ENCODE measurements at regions of chr2 and their contacts with region 1.

Region 1: GRCh38 chr2:85813982-85814801 is 60.4 kb downstream of the ATOH8 start:
- DNase-seq: peak; percentile 85 to 96 (median 94)
- ATAC-seq: peak; percentile 96
- H3K4me3 ChIP-seq: no peak overlapping the region
- H3K4me1 ChIP-seq: peaks cover 12% of the 10 kb centered on the region
- CTCF ChIP-seq: peak; percentile 73

Region 2: DNA sequence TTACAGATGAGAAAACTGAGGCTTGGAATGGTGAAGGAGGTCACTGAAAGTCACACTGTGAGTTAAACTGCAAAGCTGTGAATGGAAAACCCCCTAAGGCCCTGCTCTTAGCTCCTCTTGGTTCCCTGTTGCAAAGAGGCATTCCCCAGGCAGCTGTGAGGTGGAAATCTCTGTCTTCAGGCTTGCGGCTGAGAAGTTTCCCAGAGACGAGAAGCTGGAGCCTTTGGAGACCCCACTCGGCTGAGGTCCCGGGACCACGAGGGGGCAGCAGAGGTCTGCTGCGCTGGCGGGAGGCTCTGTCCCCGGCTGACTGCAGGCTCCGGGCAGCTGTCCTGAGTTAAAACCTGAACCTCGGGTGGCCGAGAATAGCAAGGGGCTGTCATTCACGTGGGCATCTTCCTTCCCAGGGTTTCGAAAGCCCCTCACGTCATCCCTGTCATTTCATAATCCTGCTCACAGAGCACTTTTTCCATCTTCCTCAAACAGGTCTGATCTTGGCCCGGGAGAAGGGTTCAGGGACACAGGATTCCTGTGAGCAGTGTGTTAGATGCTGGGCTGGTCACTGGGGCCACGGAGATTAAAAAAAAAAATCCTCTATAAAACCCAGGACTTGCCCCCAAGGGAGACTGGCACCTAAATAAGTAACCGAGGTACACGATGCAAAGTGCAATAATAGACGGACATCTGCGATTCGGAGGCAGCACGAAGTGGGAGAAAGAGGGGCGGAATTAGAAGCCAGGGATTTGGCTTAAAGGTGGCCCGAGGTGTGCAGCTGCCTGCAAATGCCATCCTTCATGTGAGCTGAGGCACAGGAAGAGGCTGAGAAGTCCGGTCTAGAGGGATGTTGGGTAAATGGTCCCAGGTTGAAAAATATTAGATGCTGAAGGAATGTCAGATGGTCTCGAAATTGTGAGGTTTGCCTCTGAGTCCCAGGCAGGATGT is 85.0 kb before region 1 on chr2:
- intact Hi-C with region 1: loop called (anchors 2 to 5 kb)
- DNase-seq: peak; percentile 81 to 91 (median 91)
- ATAC-seq: peak; percentile 97
- H3K4me3 ChIP-seq: no peak overlapping the region
- H3K4me1 ChIP-seq: no peaks in the 10 kb centered on the region
- CTCF ChIP-seq: peak; percentile 88

Region 3: DNA sequence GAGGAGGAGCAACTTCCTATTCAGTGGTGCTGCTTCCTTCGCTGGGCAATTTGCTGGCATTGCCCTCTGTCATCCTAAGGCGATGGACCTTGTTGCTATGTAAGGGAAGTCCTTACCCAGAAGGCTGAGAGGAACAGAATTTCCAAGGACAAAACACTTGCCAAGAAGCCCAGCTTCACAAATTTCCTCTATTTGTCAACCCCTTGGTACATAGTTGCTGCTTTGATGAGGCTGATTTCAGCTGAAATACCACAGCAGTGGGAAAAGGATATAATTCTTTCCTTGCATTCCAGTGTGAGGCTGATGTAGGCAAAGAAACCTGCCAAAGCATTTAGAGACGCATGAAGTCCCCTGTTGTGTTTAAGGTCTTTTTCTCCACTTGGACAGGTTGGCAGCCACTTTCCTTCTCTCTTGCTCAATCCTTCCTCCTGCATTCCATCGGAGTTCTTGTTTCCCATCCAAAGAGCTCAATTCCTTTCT is 91.0 kb after region 1 on chr2:
- intact Hi-C with region 1: no loop called
- DNase-seq: no peak
- ATAC-seq: no peak
- H3K4me3 ChIP-seq: no peak overlapping the region
- H3K4me1 ChIP-seq: no peaks in the 10 kb centered on the region
- CTCF ChIP-seq: no peak